GM12878 (cell line): ENCODE measurements at regions of chr10 and their contacts with region 1.

Region 1: DNA sequence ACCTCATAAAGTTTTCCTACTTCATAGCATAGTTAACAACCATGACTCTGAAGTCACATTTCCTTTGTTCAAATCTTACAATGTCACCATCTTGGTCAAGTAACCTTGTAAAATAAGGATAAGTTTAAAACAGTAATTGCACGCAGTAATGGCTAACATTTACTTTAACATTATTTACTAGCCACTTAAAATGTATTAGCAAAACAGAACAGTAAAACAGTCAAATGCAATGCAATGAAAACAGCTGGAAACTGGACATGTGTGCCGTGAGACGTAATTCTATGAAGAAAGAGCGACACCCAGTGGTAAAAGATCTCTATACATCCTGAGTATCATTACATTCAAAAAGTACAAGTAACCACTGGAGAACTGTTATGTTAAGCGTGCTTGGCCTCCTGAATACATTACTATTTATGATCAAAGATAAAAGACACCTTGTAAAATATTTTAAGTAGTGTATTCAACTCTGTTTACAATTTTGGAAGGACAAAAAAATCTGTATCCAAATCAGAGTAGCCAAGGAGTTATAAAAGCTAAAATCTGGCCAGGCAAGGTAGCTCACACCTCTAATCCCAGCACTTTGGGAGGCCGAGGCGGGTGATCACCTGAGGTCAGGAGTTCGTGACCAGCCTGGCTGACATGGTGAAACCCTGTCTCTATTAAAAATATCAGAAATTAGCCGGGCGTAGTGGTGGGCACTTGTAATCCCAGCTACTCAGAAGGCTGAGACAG is 27.2 kb downstream of the ATE1 start:
- DNase-seq: no peak
- ATAC-seq: peak; percentile 97
- H3K4me3 ChIP-seq: no peak overlapping the region
- H3K27ac ChIP-seq: no peak overlapping the region
- H3K4me1 ChIP-seq: no peaks in the 10 kb centered on the region
- H3K27me3 ChIP-seq: no peaks in the 10 kb centered on the region
- CTCF ChIP-seq: peak; percentile 53 to 64 (median 63); a peak in 5 of 6 replicates
- EP300 ChIP-seq: no peak
- POLR2A ChIP-seq: no peak
- RAD21 ChIP-seq: peak; percentile 76

Region 2: GRCh38 chr10:120942806-120943413 is 957.7 kb before region 1 on chr10:
- CTCF ChIA-PET with region 1: interaction called, 3 read pairs
- POLR2A ChIA-PET with region 1: no interaction called
- RAD21 ChIA-PET with region 1: no interaction called
- SMC1A ChIA-PET with region 1: interaction called, 4 read pairs
- in situ Hi-C with region 1: loop called (anchors 5 kb)
- intact Hi-C with region 1: loop called (anchors 1 kb)
- DNase-seq: peak; percentile 9
- ATAC-seq: peak; percentile 99
- H3K4me3 ChIP-seq: no peak overlapping the region
- H3K27ac ChIP-seq: no peak overlapping the region
- H3K4me1 ChIP-seq: no peaks in the 10 kb centered on the region
- H3K27me3 ChIP-seq: no peaks in the 10 kb centered on the region; a peak in 2 of 4 replicates
- CTCF ChIP-seq: peak; percentile 87 to 97 (median 93)
- EP300 ChIP-seq: no peak
- POLR2A ChIP-seq: no peak
- RAD21 ChIP-seq: peak; percentile 90

Region 3: GRCh38 chr10:121734589-121735045 is 166.0 kb before region 1 on chr10:
- CTCF ChIA-PET with region 1: interaction called, 20 read pairs
- POLR2A ChIA-PET with region 1: no interaction called
- RAD21 ChIA-PET with region 1: interaction called, 3 read pairs
- SMC1A ChIA-PET with region 1: interaction called, 6 read pairs
- in situ Hi-C with region 1: no loop called
- intact Hi-C with region 1: loop called (anchors 5 kb)
- DNase-seq: no peak
- ATAC-seq: peak; percentile 57
- H3K4me3 ChIP-seq: no peak overlapping the region
- H3K27ac ChIP-seq: no peak overlapping the region
- H3K4me1 ChIP-seq: no peaks in the 10 kb centered on the region
- H3K27me3 ChIP-seq: peaks cover 0 to 4% of the 10 kb centered on the region in 2 experiments; a peak in 1 of 4 replicates
- CTCF ChIP-seq: peak; percentile 58 to 65 (median 60); a peak in 5 of 6 replicates
- EP300 ChIP-seq: no peak
- POLR2A ChIP-seq: no peak
- RAD21 ChIP-seq: peak; percentile 63

Region 4: GRCh38 chr10:121823993-121824463 is 76.6 kb before region 1 on chr10:
- CTCF ChIA-PET with region 1: interaction called, 81 read pairs
- POLR2A ChIA-PET with region 1: no interaction called
- RAD21 ChIA-PET with region 1: interaction called, 21 read pairs
- SMC1A ChIA-PET with region 1: interaction called, 35 read pairs
- in situ Hi-C with region 1: no loop called
- intact Hi-C with region 1: loop called (anchors 2 kb)
- DNase-seq: no peak
- ATAC-seq: peak; percentile 76
- H3K4me3 ChIP-seq: no peak overlapping the region
- H3K27ac ChIP-seq: no peak overlapping the region
- H3K4me1 ChIP-seq: peaks cover 5% of the 10 kb centered on the region
- H3K27me3 ChIP-seq: no peaks in the 10 kb centered on the region
- CTCF ChIP-seq: peak; percentile 59 to 66 (median 63); a peak in 5 of 6 replicates
- EP300 ChIP-seq: no peak
- POLR2A ChIP-seq: no peak
- RAD21 ChIP-seq: peak; percentile 41

Region 5: GRCh38 chr10:121880895-121881294 is 19.7 kb before region 1 on chr10:
- CTCF ChIA-PET with region 1: interaction called, 32 read pairs
- POLR2A ChIA-PET with region 1: no interaction called
- RAD21 ChIA-PET with region 1: interaction called, 3 read pairs
- SMC1A ChIA-PET with region 1: interaction called, 8 read pairs
- in situ Hi-C with region 1: no loop called
- intact Hi-C with region 1: no loop called
- DNase-seq: no peak
- ATAC-seq: peak; percentile 38; the same call in 1 of the 3 replicates
- H3K4me3 ChIP-seq: no peak overlapping the region
- H3K27ac ChIP-seq: no peak overlapping the region
- H3K4me1 ChIP-seq: no peaks in the 10 kb centered on the region
- H3K27me3 ChIP-seq: no peaks in the 10 kb centered on the region
- CTCF ChIP-seq: no peak
- EP300 ChIP-seq: no peak
- POLR2A ChIP-seq: no peak
- RAD21 ChIP-seq: no peak

Region 6: GRCh38 chr10:122388287-122388997 is 487.8 kb after region 1 on chr10:
- CTCF ChIA-PET with region 1: no interaction called
- POLR2A ChIA-PET with region 1: no interaction called
- RAD21 ChIA-PET with region 1: no interaction called
- SMC1A ChIA-PET with region 1: no interaction called
- in situ Hi-C with region 1: no loop called
- intact Hi-C with region 1: no loop called
- DNase-seq: no peak
- ATAC-seq: no peak
- H3K4me3 ChIP-seq: no peak overlapping the region
- H3K27ac ChIP-seq: no peak overlapping the region
- H3K4me1 ChIP-seq: no peaks in the 10 kb centered on the region
- H3K27me3 ChIP-seq: no peaks in the 10 kb centered on the region
- CTCF ChIP-seq: no peak
- EP300 ChIP-seq: no peak
- POLR2A ChIP-seq: no peak
- RAD21 ChIP-seq: no peak